Caco-2 (cell line): ENCODE measurements at regions of chr10 and their contacts with region 1.

Region 1: GRCh38 chr10:24223953-24224352 is 15.0 kb downstream of the KIAA1217 start:
- DNase-seq: peak in 1 of 2 experiments; percentile 47
- H3K4me3 ChIP-seq: no peak overlapping the region
- H3K4me3 Mint-ChIP-seq: no peak overlapping the region
- H3K27ac Mint-ChIP-seq: no peak overlapping the region
- H3K4me1 ChIP-seq: peaks cover 16% of the 10 kb centered on the region; the same call in 1 of the 2 replicates
- H3K4me1 Mint-ChIP-seq: peaks cover 17% of the 10 kb centered on the region
- H3K27me3 ChIP-seq: no peaks in the 10 kb centered on the region
- H3K27me3 Mint-ChIP-seq: no peaks in the 10 kb centered on the region
- CTCF ChIP-seq: no peak

Region 2: GRCh38 chr10:24238519-24239252 is 14.7 kb after region 1 on chr10:
- CTCF ChIA-PET with region 1: no interaction called
- POLR2A ChIA-PET with region 1: no interaction called
- intact Hi-C with region 1: loop called (anchors 1 kb)
- DNase-seq: peak; percentile 87 to 88
- H3K4me3 ChIP-seq: peak overlapping the region; percentile 35
- H3K4me3 Mint-ChIP-seq: peak overlapping the region; percentile 89
- H3K27ac Mint-ChIP-seq: peak overlapping the region; percentile 97
- H3K4me1 ChIP-seq: peaks cover 44% of the 10 kb centered on the region
- H3K4me1 Mint-ChIP-seq: peaks cover 74% of the 10 kb centered on the region
- H3K27me3 ChIP-seq: no peaks in the 10 kb centered on the region
- H3K27me3 Mint-ChIP-seq: no peaks in the 10 kb centered on the region
- CTCF ChIP-seq: no peak

Region 3: GRCh38 chr10:24259365-24260130 is 35.6 kb after region 1 on chr10:
- CTCF ChIA-PET with region 1: no interaction called
- POLR2A ChIA-PET with region 1: no interaction called
- intact Hi-C with region 1: no loop called
- DNase-seq: no peak
- H3K4me3 ChIP-seq: no peak overlapping the region
- H3K4me3 Mint-ChIP-seq: no peak overlapping the region
- H3K27ac Mint-ChIP-seq: peak overlapping the region; percentile 57
- H3K4me1 ChIP-seq: peaks cover 50% of the 10 kb centered on the region
- H3K4me1 Mint-ChIP-seq: peaks cover 34% of the 10 kb centered on the region
- H3K27me3 ChIP-seq: no peaks in the 10 kb centered on the region
- H3K27me3 Mint-ChIP-seq: no peaks in the 10 kb centered on the region
- CTCF ChIP-seq: no peak

Region 4: GRCh38 chr10:24272374-24272773 is 48.4 kb after region 1 on chr10:
- CTCF ChIA-PET with region 1: no interaction called
- POLR2A ChIA-PET with region 1: no interaction called
- intact Hi-C with region 1: loop called (anchors 1 kb)
- DNase-seq: peak in 1 of 2 experiments; percentile 41
- H3K4me3 ChIP-seq: no peak overlapping the region
- H3K4me3 Mint-ChIP-seq: peak overlapping the region; percentile 57
- H3K27ac Mint-ChIP-seq: peak overlapping the region; percentile 45
- H3K4me1 ChIP-seq: peaks cover 32% of the 10 kb centered on the region
- H3K4me1 Mint-ChIP-seq: peaks cover 31% of the 10 kb centered on the region
- H3K27me3 ChIP-seq: no peaks in the 10 kb centered on the region
- H3K27me3 Mint-ChIP-seq: no peaks in the 10 kb centered on the region
- CTCF ChIP-seq: no peak

Region 5: GRCh38 chr10:24287559-24288195 is 63.7 kb after region 1 on chr10:
- CTCF ChIA-PET with region 1: no interaction called
- POLR2A ChIA-PET with region 1: no interaction called
- intact Hi-C with region 1: loop called (anchors 2 kb)
- DNase-seq: no peak
- H3K4me3 ChIP-seq: no peak overlapping the region
- H3K4me3 Mint-ChIP-seq: no peak overlapping the region
- H3K27ac Mint-ChIP-seq: no peak overlapping the region
- H3K4me1 ChIP-seq: peaks cover 4% of the 10 kb centered on the region; the same call in 1 of the 2 replicates
- H3K4me1 Mint-ChIP-seq: peaks cover 2% of the 10 kb centered on the region
- H3K27me3 ChIP-seq: no peaks in the 10 kb centered on the region
- H3K27me3 Mint-ChIP-seq: no peaks in the 10 kb centered on the region
- CTCF ChIP-seq: no peak

Region 6: GRCh38 chr10:24324651-24325050 is 100.7 kb after region 1 on chr10:
- CTCF ChIA-PET with region 1: no interaction called
- POLR2A ChIA-PET with region 1: no interaction called
- intact Hi-C with region 1: loop called (anchors 1 kb)
- DNase-seq: no peak
- H3K4me3 ChIP-seq: no peak overlapping the region
- H3K4me3 Mint-ChIP-seq: no peak overlapping the region
- H3K27ac Mint-ChIP-seq: no peak overlapping the region
- H3K4me1 ChIP-seq: no peaks in the 10 kb centered on the region
- H3K4me1 Mint-ChIP-seq: peaks cover 5% of the 10 kb centered on the region
- H3K27me3 ChIP-seq: no peaks in the 10 kb centered on the region
- H3K27me3 Mint-ChIP-seq: no peaks in the 10 kb centered on the region
- CTCF ChIP-seq: no peak

Region 7: GRCh38 chr10:24360282-24361127 is 136.6 kb after region 1 on chr10:
- CTCF ChIA-PET with region 1: no interaction called
- POLR2A ChIA-PET with region 1: no interaction called
- intact Hi-C with region 1: loop called (anchors 1 kb)
- DNase-seq: peak; percentile 75 to 84
- H3K4me3 ChIP-seq: no peak overlapping the region
- H3K4me3 Mint-ChIP-seq: no peak overlapping the region
- H3K27ac Mint-ChIP-seq: peak overlapping the region; percentile 36
- H3K4me1 ChIP-seq: no peaks in the 10 kb centered on the region
- H3K4me1 Mint-ChIP-seq: peaks cover 7% of the 10 kb centered on the region
- H3K27me3 ChIP-seq: no peaks in the 10 kb centered on the region
- H3K27me3 Mint-ChIP-seq: no peaks in the 10 kb centered on the region
- CTCF ChIP-seq: peak; percentile 91 to 92